ENCODE measurements at regions of chr17 and their contacts with region 1.

Region 1: GRCh38 chr17:81238817-81239600 is at the starts of genes NDUFAF8 and TEPSIN:
- DNase-seq: peak; percentile 97 to 100 (median 98)
- ATAC-seq: peak; percentile 97
- H3K4me3 ChIP-seq: peak within 1 kb of the TSS; percentile 82
- H3K27ac ChIP-seq: peak within 1 kb of the TSS; percentile 82
- H3K4me1 ChIP-seq: peaks cover 28 to 89% of the 10 kb centered on the region in 2 experiments
- H3K27me3 ChIP-seq: no peaks in the 10 kb centered on the region
- CTCF ChIP-seq: no peak
- EP300 ChIP-seq: no peak
- POLR2A ChIP-seq: peak; percentile 75
- RAD21 ChIP-seq: no peak
- polyA plus RNA-seq, gene NDUFAF8: 13.5 to 17.4 TPM
- polyA plus RNA-seq, gene TEPSIN: 0.80 to 0.81 TPM

Region 2: DNA sequence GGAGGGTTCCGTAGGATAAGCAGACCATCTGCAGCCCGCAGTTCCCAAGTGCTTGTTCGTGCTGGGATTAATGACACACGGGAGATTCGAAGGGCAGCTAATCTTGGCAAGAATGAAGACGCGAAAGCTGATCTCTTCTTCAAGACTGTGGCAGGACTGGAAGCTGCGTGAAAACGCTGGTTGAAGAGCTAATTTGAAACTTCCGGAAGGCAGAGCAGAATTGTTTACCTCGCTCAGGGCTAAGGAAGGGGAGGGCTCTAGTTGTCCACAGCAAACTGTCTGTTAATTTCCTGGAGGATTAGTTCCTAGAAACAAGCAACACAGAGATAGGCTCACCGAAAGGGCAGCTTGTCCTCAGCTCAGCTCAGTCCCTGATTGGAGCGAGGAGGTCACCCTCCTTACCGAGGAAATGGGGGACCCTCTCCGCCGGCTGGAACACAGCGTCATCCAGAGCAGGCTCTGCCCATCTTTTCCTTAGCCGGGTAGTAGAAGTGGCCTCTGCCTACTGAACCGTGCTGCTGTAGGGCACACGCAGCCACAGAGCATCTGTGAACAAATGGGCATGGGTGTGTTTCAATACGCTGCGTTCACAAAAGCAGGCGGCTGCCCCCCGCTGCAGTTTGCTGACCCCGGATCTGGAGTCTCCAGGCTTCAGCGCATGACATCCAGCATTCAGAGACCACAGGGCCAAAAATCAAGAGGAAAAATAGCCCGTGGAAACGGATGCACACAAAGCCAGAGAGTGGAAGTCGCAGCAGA is 220.8 kb before region 1 on chr17:
- CTCF ChIA-PET with region 1: no interaction called
- POLR2A ChIA-PET with region 1: interaction called, 3 read pairs
- in situ Hi-C with region 1: no loop called
- intact Hi-C with region 1: loop called (anchors 10 kb)
- DNase-seq: peak; percentile 55 to 92 (median 74)
- ATAC-seq: peak; percentile 92
- H3K4me3 ChIP-seq: peak overlapping the region; percentile 53
- H3K27ac ChIP-seq: peak overlapping the region; percentile 92
- H3K4me1 ChIP-seq: peaks cover 41 to 46% of the 10 kb centered on the region in 2 experiments
- H3K27me3 ChIP-seq: no peaks in the 10 kb centered on the region
- CTCF ChIP-seq: no peak
- EP300 ChIP-seq: peak; percentile 84
- POLR2A ChIP-seq: peak; percentile 86
- RAD21 ChIP-seq: no peak

Measured in K562 (cell line).